OCI-LY7 (cell line): ENCODE measurements at regions of chr1 and their contacts with region 1.

Region 1: GRCh38 chr1:14869187-14869586 is 270.7 kb downstream of the KAZN start:
- DNase-seq: no peak
- H3K4me3 ChIP-seq: no peak overlapping the region
- H3K27ac ChIP-seq: no peak overlapping the region
- H3K4me1 ChIP-seq: no peaks in the 10 kb centered on the region
- CTCF ChIP-seq: no peak

Region 2: GRCh38 chr1:14826172-14826636 is 43.0 kb before region 1 on chr1:
- CTCF ChIA-PET with region 1: no interaction called
- POLR2A ChIA-PET with region 1: no interaction called
- intact Hi-C with region 1: no loop called
- DNase-seq: no peak
- H3K4me3 ChIP-seq: no peak overlapping the region
- H3K27ac ChIP-seq: no peak overlapping the region
- H3K4me1 ChIP-seq: peaks cover 6% of the 10 kb centered on the region
- CTCF ChIP-seq: no peak

Region 3: DNA sequence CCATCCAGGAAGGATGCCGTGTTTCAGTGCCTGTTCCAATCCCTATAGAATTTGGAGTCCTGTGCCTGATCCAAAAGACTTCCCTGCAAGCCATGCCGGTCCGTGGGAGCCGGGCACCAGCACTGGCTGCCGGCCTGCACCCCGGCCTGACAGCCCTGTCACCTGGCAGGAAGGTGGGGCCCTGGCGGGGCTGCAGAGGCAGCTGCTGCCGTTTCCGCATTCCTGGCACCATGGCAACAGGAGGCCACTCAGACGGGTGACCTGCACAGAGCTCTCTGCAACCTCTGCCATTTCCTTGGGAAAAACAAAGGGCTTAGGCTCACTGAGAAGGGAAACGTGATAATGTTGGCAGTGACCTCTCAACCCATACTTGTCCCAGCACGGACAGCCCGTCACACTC is 221.2 kb after region 1 on chr1:
- CTCF ChIA-PET with region 1: no interaction called
- POLR2A ChIA-PET with region 1: interaction called, 10 read pairs
- intact Hi-C with region 1: no loop called
- DNase-seq: peak; percentile 71
- H3K4me3 ChIP-seq: no peak overlapping the region
- H3K27ac ChIP-seq: no peak overlapping the region
- H3K4me1 ChIP-seq: peaks cover 22% of the 10 kb centered on the region
- CTCF ChIP-seq: no peak